Astrocyte of the cerebellum (primary cell): ENCODE measurements at regions of chr9 and their contacts with region 1.

Region 1: GRCh38 chr9:106921341-106921899 is 58.5 kb downstream of the ZNF462 start:
- DNase-seq: peak; percentile 35
- H3K4me3 ChIP-seq: no peak overlapping the region
- CTCF ChIP-seq: no peak

Region 2: GRCh38 chr9:106862825-106863720 is 58.3 kb before region 1 on chr9 and contains the start of gene ZNF462:
- in situ Hi-C with region 1: loop called (anchors 5 kb)
- DNase-seq: no peak
- H3K4me3 ChIP-seq: peak within 1 kb of the TSS; percentile 78
- CTCF ChIP-seq: no peak

Region 3: GRCh38 chr9:106962615-106963363 is 41.4 kb after region 1 on chr9:
- in situ Hi-C with region 1: no loop called
- DNase-seq: no peak
- H3K4me3 ChIP-seq: no peak overlapping the region
- CTCF ChIP-seq: no peak